Astrocyte of the cerebellum (primary cell): ENCODE measurements at regions of chr15 and their contacts with region 1.

Region 1: DNA sequence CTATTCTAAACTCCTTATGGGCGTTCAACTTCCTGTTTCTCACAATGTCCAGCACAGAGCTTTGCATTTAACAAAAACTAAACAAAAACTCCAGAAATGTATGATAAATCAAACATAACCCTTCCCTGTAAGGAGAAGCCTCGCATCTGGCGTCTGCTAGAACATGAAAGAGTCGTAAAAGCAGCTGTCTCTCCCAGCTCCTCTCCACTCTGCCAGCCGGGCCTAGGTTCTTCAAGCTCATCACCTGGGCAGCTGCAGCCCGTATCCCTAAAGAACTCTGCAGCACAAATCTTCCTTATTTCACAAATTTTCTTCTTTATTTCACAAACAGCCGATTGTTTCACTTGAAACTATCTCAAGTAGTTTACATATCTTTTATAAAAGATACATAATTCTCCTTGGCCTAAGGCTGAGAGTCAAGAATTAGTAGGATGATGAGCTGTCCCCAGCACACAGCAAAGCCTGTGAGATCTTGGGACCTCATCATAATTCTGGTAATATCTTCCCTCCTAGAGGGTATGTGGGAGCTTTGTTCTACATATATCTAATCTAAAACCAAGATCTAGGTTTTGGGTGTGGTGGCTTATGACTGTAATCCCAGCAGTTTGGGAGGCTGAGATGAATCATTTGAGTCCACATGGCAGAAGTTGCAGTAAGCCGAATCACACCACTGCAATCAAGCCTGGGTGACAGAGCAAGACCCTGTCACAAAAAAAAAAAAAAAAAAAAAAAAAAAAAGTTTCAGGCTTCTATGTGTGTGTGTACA is 35.3 kb downstream of the ANXA2 start:
- DNase-seq: no peak
- H3K4me3 ChIP-seq: no peak overlapping the region
- CTCF ChIP-seq: no peak

Region 2: DNA sequence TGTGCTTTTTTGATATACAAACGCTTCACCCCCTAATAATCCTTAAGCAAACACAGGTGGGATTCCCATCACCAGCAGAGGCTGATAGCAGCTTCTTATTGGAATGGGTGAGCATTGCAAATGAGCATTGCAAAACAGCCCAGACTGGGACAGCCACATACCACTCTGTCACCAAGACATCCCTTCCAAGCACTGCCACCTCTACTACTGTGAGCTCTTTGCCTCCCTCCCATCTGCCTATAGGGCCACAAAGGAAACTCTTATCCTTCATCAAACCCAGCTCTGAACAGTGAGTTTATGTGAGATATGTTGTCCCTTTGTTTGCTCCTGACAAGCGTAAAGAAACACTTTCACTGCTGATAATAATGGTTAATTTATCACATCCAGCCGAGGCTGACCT is 111.3 kb before region 1 on chr15:
- in situ Hi-C with region 1: no loop called
- DNase-seq: no peak
- H3K4me3 ChIP-seq: no peak overlapping the region
- CTCF ChIP-seq: no peak

Region 3: DNA sequence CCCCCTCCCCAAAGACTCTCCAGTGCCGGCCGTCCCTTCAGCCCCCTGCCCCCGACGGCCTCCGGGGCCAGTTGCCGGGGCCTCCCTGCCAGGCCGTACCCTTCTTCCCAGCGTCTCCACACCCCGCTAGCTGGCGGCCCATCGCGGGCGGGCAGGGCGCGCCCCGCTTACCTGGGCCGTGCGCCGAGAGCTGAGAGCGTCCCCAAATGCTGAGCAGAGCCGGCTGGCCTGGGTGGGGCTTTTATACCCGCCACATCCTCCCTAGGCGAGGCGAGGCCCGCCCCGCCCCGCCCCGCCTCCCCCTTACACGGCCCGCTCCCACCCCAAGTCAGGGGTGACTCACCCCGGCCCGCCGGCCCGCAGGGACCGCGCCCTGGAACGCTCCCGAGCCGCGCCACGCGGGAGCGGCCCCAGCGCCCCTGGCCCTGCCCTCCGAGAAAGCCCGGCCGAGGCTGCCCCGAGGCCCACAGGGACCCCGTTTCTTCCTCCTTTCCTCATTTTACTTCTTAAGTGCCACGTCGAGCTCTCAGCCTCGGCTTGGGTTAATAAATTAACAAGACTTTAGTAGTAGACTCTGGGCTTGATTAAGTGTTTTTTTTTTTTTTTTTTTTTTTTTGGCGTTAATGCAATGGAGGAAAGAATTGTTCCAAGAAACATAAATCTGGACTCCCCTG is 35.4 kb after region 1 on chr15 and contains the start of gene ANXA2:
- in situ Hi-C with region 1: loop called (anchors 5 kb)
- DNase-seq: peak; percentile 55
- H3K4me3 ChIP-seq: peak within 1 kb of the TSS; percentile 73
- CTCF ChIP-seq: no peak

Region 4: DNA sequence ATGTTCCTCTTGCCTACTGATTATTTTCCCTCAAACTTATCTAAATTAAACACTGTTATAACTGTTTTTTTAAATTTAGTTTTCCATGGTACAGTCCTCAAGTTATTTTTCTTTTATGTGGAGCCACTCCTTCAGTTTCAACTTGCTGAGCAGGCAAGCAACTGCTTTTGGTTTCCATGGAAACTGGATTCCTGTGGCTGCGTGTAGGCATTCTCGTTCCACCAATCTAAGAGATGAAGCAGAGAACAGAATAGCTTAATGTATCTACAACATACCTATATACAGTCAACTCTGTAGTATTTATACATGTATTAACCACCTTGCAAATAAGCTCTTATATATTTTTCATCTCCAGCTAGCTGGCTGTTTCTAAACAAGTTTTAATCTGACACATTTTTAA is 61.0 kb after region 1 on chr15:
- in situ Hi-C with region 1: no loop called
- DNase-seq: peak; percentile 82
- H3K4me3 ChIP-seq: no peak overlapping the region
- CTCF ChIP-seq: no peak

Region 5: GRCh38 chr15:60438646-60439045 is 76.1 kb after region 1 on chr15:
- in situ Hi-C with region 1: loop called (anchors 5 kb)
- DNase-seq: no peak
- H3K4me3 ChIP-seq: no peak overlapping the region
- CTCF ChIP-seq: no peak